ENCODE measurements at regions of chr1 and their contacts with region 1.

Region 1: GRCh38 chr1:156728597-156729462 is at the start of gene ISG20L2:
- DNase-seq: peak; percentile 96
- H3K4me3 ChIP-seq: peak within 1 kb of the TSS; percentile 100
- H3K27ac ChIP-seq: peak within 1 kb of the TSS; percentile 95
- H3K27me3 ChIP-seq: no peaks in the 10 kb centered on the region
- CTCF ChIP-seq: 0 out of 2 replicates have a peak, but pooled peaks have one; percentile 13
- polyA plus RNA-seq, gene ISG20L2: 25.6 and 29.1 TPM in 2 replicates

Region 2: GRCh38 chr1:156583821-156584622 is 144.8 kb before region 1 on chr1:
- CTCF ChIA-PET with region 1: no interaction called
- POLR2A ChIA-PET with region 1: no interaction called
- DNase-seq: peak; percentile 72
- H3K4me3 ChIP-seq: no peak overlapping the region
- H3K27ac ChIP-seq: no peak overlapping the region
- H3K27me3 ChIP-seq: peaks cover 19% of the 10 kb centered on the region
- CTCF ChIP-seq: peak; percentile 94

Region 3: DNA sequence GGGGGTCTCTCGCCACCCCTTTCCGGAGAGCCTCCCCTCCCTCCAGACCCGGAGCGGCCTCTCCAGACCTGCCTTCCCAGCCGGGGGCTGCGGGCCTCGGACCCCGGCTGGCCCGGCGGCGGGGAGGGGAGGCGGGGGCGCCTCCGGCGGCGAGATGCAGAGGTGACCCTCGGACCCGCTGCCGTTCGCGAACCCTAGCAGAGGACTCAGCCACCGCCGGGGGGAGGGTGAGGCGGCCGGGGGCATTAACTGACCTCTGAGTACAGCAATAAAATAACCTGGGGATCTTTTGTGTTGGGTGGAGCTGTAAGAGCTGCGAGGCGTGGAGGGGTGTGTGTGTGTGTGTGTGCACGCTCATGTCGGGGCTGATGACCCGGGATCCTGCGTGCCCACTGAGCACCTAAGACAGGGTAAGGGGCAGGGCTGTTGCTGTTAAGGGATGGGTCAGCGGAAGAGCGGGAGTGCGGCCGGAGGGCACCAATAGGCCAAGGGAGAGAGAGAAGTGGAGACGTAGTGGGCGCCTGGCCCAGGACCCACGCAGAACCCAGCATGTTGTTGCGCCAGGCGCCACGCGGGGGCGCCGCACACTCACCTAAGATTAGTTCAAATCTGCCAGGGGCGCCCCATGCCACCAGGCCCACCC is 103.3 kb before region 1 on chr1:
- CTCF ChIA-PET with region 1: interaction called, 14 read pairs
- POLR2A ChIA-PET with region 1: no interaction called
- DNase-seq: no peak
- H3K4me3 ChIP-seq: no peak overlapping the region
- H3K27ac ChIP-seq: no peak overlapping the region
- H3K27me3 ChIP-seq: peaks cover 46% of the 10 kb centered on the region
- CTCF ChIP-seq: peak; percentile 80

Region 4: GRCh38 chr1:156689035-156689952 is 39.5 kb before region 1 on chr1:
- CTCF ChIA-PET with region 1: interaction called, 616 read pairs
- POLR2A ChIA-PET with region 1: interaction called, 37 read pairs
- DNase-seq: peak; percentile 65
- H3K4me3 ChIP-seq: peak overlapping the region; percentile 44
- H3K27ac ChIP-seq: no peak overlapping the region
- H3K27me3 ChIP-seq: no peaks in the 10 kb centered on the region
- CTCF ChIP-seq: peak; percentile 93

Region 5: DNA sequence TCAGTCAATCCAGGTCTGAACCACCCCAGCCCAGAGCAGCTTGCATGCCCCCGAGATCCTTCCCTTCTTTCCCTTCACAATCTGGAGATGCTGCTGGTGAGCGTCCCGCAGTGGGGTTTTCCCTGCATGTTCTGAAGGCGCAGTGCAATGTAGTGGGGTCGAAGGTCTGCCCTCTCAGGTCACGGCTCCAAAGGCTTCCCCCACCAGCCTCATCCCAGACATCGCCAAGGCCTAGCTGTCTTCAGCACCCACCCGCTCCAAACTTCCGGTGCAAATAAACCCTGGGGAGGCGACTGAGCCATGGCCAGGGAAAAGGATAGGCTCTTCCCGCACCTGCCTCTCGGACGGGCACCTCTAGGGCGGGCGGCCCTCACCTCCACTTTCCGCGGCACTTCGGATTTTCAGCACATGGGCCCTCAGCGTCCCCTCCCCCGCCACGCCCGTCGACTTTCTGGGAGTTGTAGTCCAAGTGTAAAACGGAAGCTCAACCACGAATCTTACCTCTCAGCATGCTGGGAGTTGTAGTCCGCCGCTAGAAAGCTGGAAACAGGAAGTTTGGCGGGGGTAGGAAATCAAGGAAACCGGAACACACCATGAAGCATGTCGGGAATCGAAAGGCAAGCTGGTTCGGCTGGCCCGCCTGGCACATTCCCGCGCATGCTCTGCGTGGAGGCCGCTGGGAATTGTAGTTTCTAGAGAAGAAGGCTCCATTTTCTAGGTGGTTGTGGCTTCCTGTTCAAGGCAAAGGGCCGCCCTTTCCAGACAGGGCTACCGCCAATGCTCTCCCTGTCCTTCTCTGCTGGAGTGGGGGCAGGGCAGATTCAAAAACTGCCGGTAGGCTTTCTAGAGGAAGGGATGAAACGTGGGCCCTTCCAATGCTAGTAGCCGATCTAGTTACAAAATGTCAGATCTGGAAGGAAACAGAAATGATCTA is 12.1 kb after region 1 on chr1 and contains the start of gene MRPL24:
- CTCF ChIA-PET with region 1: interaction called, 13 read pairs
- POLR2A ChIA-PET with region 1: interaction called, 21 read pairs
- DNase-seq: peak; percentile 98
- H3K4me3 ChIP-seq: peak within 1 kb of the TSS; percentile 94
- H3K27ac ChIP-seq: peak within 1 kb of the TSS; percentile 75
- H3K27me3 ChIP-seq: no peaks in the 10 kb centered on the region
- CTCF ChIP-seq: no peak
- polyA plus RNA-seq, gene MRPL24: 65.5 and 80.4 TPM in 2 replicates

Region 6: DNA sequence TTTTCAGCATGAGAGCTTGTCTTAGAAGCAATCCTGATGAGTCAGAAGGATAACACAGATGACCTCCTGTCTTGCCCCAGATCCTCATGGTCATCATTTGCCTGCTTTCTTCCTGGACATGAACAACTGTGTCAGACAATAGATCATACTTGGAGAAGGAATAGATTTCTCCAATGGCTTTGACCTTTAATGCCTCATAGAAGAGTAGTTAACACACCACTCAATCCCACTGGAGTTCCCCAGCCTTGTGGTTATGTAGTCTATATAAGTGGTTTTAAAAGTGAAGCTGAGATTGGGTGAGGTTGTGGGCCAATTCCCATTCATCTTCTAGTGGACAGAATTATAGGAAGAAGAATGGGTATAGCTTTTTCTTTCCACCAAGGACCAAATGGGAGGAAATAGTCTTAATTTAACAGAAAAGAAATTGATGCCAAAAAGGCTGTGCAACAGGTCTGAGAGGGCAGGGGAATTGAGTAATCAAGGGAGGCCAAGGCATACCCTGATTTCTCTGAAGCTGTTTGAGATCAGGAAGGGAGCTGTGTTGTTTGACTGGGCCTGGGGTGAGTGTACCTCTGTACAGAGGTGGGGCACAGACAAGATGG is 52.9 kb after region 1 on chr1:
- CTCF ChIA-PET with region 1: interaction called, 11 read pairs
- POLR2A ChIA-PET with region 1: interaction called, 4 read pairs
- DNase-seq: no peak
- H3K4me3 ChIP-seq: no peak overlapping the region
- H3K27ac ChIP-seq: no peak overlapping the region
- H3K27me3 ChIP-seq: no peaks in the 10 kb centered on the region
- CTCF ChIP-seq: no peak

Region 7: GRCh38 chr1:156860113-156860627 is 131.3 kb after region 1 on chr1:
- CTCF ChIA-PET with region 1: interaction called, 72 read pairs
- POLR2A ChIA-PET with region 1: interaction called, 4 read pairs
- DNase-seq: no peak
- H3K4me3 ChIP-seq: peak overlapping the region; percentile 32
- H3K27ac ChIP-seq: no peak overlapping the region
- H3K27me3 ChIP-seq: peaks cover 81% of the 10 kb centered on the region
- CTCF ChIP-seq: peak; percentile 78